ENCODE measurements at regions of chr20 and their contacts with region 1.

Region 1: GRCh38 chr20:46363800-46364634 is 42.4 kb downstream of the ELMO2 start:
- DNase-seq: peak; percentile 87
- ATAC-seq: peak; percentile 90
- H3K4me3 Mint-ChIP-seq: peak overlapping the region; percentile 91
- H3K27ac Mint-ChIP-seq: peak overlapping the region; percentile 97
- H3K4me1 Mint-ChIP-seq: peaks cover 13% of the 10 kb centered on the region
- H3K27me3 Mint-ChIP-seq: no peaks in the 10 kb centered on the region
- CTCF ChIP-seq: no peak

Region 2: DNA sequence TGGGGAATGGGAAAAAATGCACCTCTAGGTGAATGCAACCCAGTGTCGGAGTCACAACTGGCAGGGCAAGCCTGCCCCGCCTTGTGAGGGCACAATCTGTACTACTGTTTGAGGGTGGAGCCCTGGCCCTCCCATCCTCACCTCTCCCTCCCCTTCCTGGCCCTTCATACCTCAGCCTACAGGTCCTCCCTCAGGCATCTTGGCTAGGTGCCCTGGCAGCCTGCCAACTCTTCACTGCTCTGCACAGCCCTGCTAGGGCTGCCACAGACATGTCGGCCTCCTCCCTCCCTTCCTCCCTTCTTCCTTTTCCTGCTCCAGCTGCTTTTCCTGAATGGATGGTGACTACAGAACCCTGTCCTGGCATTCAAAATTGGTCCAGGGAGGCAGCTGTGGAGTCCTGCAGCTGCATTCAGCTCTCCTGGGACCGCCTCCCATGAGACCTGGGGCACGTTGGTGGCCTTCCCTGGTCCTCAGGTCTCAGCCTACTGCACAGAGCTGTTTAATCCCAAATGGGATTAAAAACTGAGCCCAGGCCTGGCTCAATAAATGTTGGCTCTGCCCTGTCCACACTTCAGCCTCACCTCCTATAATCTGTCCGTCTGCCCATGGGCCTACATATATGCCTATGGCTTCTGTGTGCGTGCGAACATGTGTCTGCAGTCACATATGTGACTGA is 108.5 kb before region 1 on chr20:
- CTCF ChIA-PET with region 1: no interaction called
- POLR2A ChIA-PET with region 1: no interaction called
- DNase-seq: no peak
- ATAC-seq: no peak
- H3K4me3 Mint-ChIP-seq: no peak overlapping the region
- H3K27ac Mint-ChIP-seq: no peak overlapping the region
- H3K4me1 Mint-ChIP-seq: peaks cover 2% of the 10 kb centered on the region
- H3K27me3 Mint-ChIP-seq: peaks cover 29% of the 10 kb centered on the region
- CTCF ChIP-seq: no peak

Region 3: GRCh38 chr20:46406199-46406985 is 42.4 kb after region 1 on chr20 and contains the start of gene ELMO2:
- CTCF ChIA-PET with region 1: interaction called, 16 read pairs
- POLR2A ChIA-PET with region 1: interaction called, 8 read pairs
- DNase-seq: peak; percentile 98
- ATAC-seq: peak; percentile 86
- H3K4me3 Mint-ChIP-seq: peak within 1 kb of the TSS; percentile 93
- H3K27ac Mint-ChIP-seq: peak within 1 kb of the TSS; percentile 83
- H3K4me1 Mint-ChIP-seq: peaks cover 33% of the 10 kb centered on the region
- H3K27me3 Mint-ChIP-seq: peaks cover 16% of the 10 kb centered on the region
- CTCF ChIP-seq: no peak
- total RNA-seq, gene ELMO2: 28.4 to 35.5 TPM (median 32.3 TPM) in 3 replicates

Region 4: GRCh38 chr20:46468509-46468908 is 104.5 kb after region 1 on chr20:
- CTCF ChIA-PET with region 1: no interaction called
- POLR2A ChIA-PET with region 1: no interaction called
- DNase-seq: no peak
- ATAC-seq: no peak
- H3K4me3 Mint-ChIP-seq: no peak overlapping the region
- H3K27ac Mint-ChIP-seq: no peak overlapping the region
- H3K4me1 Mint-ChIP-seq: peaks cover 5% of the 10 kb centered on the region
- H3K27me3 Mint-ChIP-seq: no peaks in the 10 kb centered on the region
- CTCF ChIP-seq: no peak

Measured in WTC11 (cell line).